ENCODE measurements at regions of chr2 and their contacts with region 1.

Region 1: GRCh38 chr2:55014962-55015939 is 35.0 kb downstream of the RTN4 start:
- DNase-seq: peak in 7 of 9 experiments; percentile 22 to 73 (median 41)
- ATAC-seq: peak; percentile 39
- H3K4me3 ChIP-seq: no peak overlapping the region
- H3K4me3 Mint-ChIP-seq: no peak overlapping the region
- H3K27ac ChIP-seq: no peak overlapping the region
- H3K27ac Mint-ChIP-seq: no peak overlapping the region
- H3K4me1 ChIP-seq: peaks cover 28% of the 10 kb centered on the region
- H3K4me1 Mint-ChIP-seq: peaks cover 54% of the 10 kb centered on the region
- H3K27me3 ChIP-seq: no peaks in the 10 kb centered on the region
- H3K27me3 Mint-ChIP-seq: no peaks in the 10 kb centered on the region
- CTCF ChIP-seq: peak; percentile 59

Region 2: DNA sequence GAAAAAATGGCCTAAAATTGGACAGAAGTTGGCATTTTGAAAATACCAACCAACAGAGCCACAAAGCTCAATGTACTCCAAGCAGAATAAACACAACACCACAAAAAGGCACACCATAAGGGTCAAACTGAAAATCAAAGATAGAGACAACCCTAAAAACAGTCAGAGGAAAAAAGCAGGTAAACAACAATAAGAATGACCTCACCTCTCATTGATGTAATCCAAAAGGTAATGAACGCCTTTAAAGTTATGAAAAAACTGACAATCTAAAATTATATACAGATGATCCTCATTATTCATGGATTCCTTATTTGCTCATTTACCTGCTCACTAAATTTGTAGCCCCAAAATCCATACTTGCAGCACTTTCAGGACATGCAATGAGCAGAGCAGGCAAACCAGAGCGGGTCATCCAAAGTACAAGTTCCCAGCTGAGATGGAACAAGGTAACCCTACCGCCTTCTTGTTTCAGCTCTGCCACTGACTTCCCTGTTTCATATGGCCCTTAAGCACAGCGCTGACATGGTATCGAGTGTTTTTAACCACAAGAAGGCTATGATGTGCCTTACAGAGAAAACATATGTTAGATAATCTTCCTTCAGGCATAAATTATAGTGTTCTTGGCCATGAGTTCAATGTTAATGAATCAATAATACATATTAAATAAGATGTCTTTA is 18.0 kb after region 1 on chr2:
- CTCF ChIA-PET with region 1: interaction called, 7 read pairs
- POLR2A ChIA-PET with region 1: interaction called, 3 read pairs
- intact Hi-C with region 1: loop called in 1 of 2 experiments (anchors 2 kb)
- DNase-seq: peak in 3 of 9 experiments; percentile 22 to 47 (median 36)
- ATAC-seq: peak; percentile 90
- H3K4me3 ChIP-seq: no peak overlapping the region
- H3K4me3 Mint-ChIP-seq: peak overlapping the region; percentile 6
- H3K27ac ChIP-seq: no peak overlapping the region
- H3K27ac Mint-ChIP-seq: peak overlapping the region; percentile 23
- H3K4me1 ChIP-seq: peaks cover 25% of the 10 kb centered on the region
- H3K4me1 Mint-ChIP-seq: peaks cover 71% of the 10 kb centered on the region
- H3K27me3 ChIP-seq: no peaks in the 10 kb centered on the region
- H3K27me3 Mint-ChIP-seq: no peaks in the 10 kb centered on the region
- CTCF ChIP-seq: no peak

Region 3: GRCh38 chr2:55431982-55432627 is 416.9 kb after region 1 on chr2:
- CTCF ChIA-PET with region 1: no interaction called
- POLR2A ChIA-PET with region 1: no interaction called
- intact Hi-C with region 1: loop called in 1 of 2 experiments (anchors 5 kb)
- DNase-seq: peak in 2 of 9 experiments; percentile 35 to 59
- ATAC-seq: peak; percentile 42
- H3K4me3 ChIP-seq: no peak overlapping the region
- H3K4me3 Mint-ChIP-seq: no peak overlapping the region
- H3K27ac ChIP-seq: no peak overlapping the region
- H3K27ac Mint-ChIP-seq: no peak overlapping the region
- H3K4me1 ChIP-seq: no peaks in the 10 kb centered on the region
- H3K4me1 Mint-ChIP-seq: no peaks in the 10 kb centered on the region
- H3K27me3 ChIP-seq: no peaks in the 10 kb centered on the region
- H3K27me3 Mint-ChIP-seq: no peaks in the 10 kb centered on the region
- CTCF ChIP-seq: peak; percentile 49

Measured in CD8-positive, alpha-beta T cell (primary cell).